MCF 10A (cell line): ENCODE measurements at regions of chr1 and their contacts with region 1.

Region 1: GRCh38 chr1:79259388-79260336 is 253.1 kb upstream of the ADGRL4 start:
- DNase-seq: peak; percentile 57
- H3K4me3 Mint-ChIP-seq: no peak overlapping the region
- H3K27ac Mint-ChIP-seq: no peak overlapping the region
- H3K4me1 Mint-ChIP-seq: no peaks in the 10 kb centered on the region
- H3K27me3 Mint-ChIP-seq: no peaks in the 10 kb centered on the region
- CTCF ChIP-seq: peak; percentile 62

Region 2: DNA sequence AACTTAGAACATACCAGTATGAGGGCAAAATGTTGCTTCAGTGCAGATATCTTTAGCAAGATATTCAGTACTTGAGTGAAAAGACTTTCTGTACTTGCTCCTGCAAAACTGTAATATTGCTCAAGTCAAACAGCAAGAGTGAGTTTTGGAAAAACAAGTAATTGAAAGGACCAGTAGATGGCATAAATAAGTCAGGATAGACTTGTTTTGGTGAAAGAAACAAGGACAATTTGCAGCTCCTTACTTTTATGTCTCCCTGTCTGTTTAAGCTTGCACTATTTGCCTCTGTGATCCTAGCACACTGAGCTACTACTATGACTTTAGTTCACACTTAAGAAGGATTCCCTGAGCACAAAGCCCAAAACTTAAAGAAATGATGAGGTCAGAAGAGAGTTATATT is 571.0 kb before region 1 on chr1:
- CTCF ChIA-PET with region 1: no interaction called
- POLR2A ChIA-PET with region 1: no interaction called
- intact Hi-C with region 1: loop called (anchors 2 kb)
- DNase-seq: peak; percentile 44
- H3K4me3 Mint-ChIP-seq: no peak overlapping the region
- H3K27ac Mint-ChIP-seq: no peak overlapping the region
- H3K4me1 Mint-ChIP-seq: peaks cover 22% of the 10 kb centered on the region
- H3K27me3 Mint-ChIP-seq: no peaks in the 10 kb centered on the region
- CTCF ChIP-seq: peak; percentile 43

Region 3: GRCh38 chr1:78864175-78864574 is 395.5 kb before region 1 on chr1:
- CTCF ChIA-PET with region 1: no interaction called
- POLR2A ChIA-PET with region 1: no interaction called
- intact Hi-C with region 1: no loop called
- DNase-seq: no peak
- H3K4me3 Mint-ChIP-seq: no peak overlapping the region
- H3K27ac Mint-ChIP-seq: no peak overlapping the region
- H3K4me1 Mint-ChIP-seq: no peaks in the 10 kb centered on the region
- H3K27me3 Mint-ChIP-seq: no peaks in the 10 kb centered on the region
- CTCF ChIP-seq: no peak

Region 4: DNA sequence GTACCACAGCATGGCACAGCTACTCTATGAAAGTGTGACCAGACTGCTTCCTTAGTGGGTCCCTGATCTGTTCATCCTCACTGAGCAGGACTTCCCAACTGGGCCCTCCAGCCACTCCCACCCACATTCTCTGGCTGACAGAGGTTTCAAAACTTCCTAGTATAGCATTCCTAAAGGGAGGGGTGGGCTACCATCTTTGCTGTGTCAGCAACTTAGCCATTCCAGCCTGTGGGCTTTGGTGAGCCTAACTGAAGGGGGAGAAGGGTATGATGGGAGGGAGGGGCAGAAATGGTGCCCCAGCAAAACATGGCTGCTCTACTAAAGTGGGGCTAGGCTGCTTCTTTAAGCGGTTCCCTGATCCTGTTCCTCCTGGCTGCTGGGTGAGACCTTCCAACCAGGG is 12.1 kb after region 1 on chr1:
- CTCF ChIA-PET with region 1: interaction called, 14 read pairs
- POLR2A ChIA-PET with region 1: no interaction called
- intact Hi-C with region 1: no loop called
- DNase-seq: no peak
- H3K4me3 Mint-ChIP-seq: no peak overlapping the region
- H3K27ac Mint-ChIP-seq: no peak overlapping the region
- H3K4me1 Mint-ChIP-seq: no peaks in the 10 kb centered on the region
- H3K27me3 Mint-ChIP-seq: no peaks in the 10 kb centered on the region
- CTCF ChIP-seq: no peak

Region 5: GRCh38 chr1:79353224-79353623 is 93.6 kb after region 1 on chr1:
- CTCF ChIA-PET with region 1: interaction called, 14 read pairs
- POLR2A ChIA-PET with region 1: interaction called, 4 read pairs
- intact Hi-C with region 1: loop called (anchors 1 kb)
- DNase-seq: peak; percentile 66
- H3K4me3 Mint-ChIP-seq: no peak overlapping the region
- H3K27ac Mint-ChIP-seq: no peak overlapping the region
- H3K4me1 Mint-ChIP-seq: peaks cover 8% of the 10 kb centered on the region
- H3K27me3 Mint-ChIP-seq: no peaks in the 10 kb centered on the region
- CTCF ChIP-seq: peak; percentile 51

Region 6: GRCh38 chr1:79497193-79497773 is 237.6 kb after region 1 on chr1:
- CTCF ChIA-PET with region 1: interaction called, 5 read pairs
- POLR2A ChIA-PET with region 1: no interaction called
- intact Hi-C with region 1: loop called (anchors 1 kb)
- DNase-seq: peak; percentile 53
- H3K4me3 Mint-ChIP-seq: no peak overlapping the region
- H3K27ac Mint-ChIP-seq: no peak overlapping the region
- H3K4me1 Mint-ChIP-seq: no peaks in the 10 kb centered on the region
- H3K27me3 Mint-ChIP-seq: no peaks in the 10 kb centered on the region
- CTCF ChIP-seq: peak; percentile 89